ENCODE measurements at regions of chr9 and their contacts with region 1.

Region 1: GRCh38 chr9:5671711-5672353 is 42.9 kb downstream of the RIC1 start:
- DNase-seq: no peak
- H3K4me3 ChIP-seq: no peak overlapping the region
- H3K27ac ChIP-seq: peak overlapping the region in 4 of 59 donors; percentile 5 to 34 (median 12)
- H3K27me3 ChIP-seq: no peaks in the 10 kb centered on the region
- CTCF ChIP-seq: no peak

Region 2: GRCh38 chr9:5735072-5735471 is 63.2 kb after region 1 on chr9:
- intact Hi-C with region 1: loop called in 1 of 2 experiments (anchors 10 kb)
- DNase-seq: no peak
- H3K4me3 ChIP-seq: no peak overlapping the region
- H3K27ac ChIP-seq: no peak overlapping the region
- H3K27me3 ChIP-seq: no peaks in the 10 kb centered on the region
- CTCF ChIP-seq: no peak